ENCODE measurements at regions of chr7 and their contacts with region 1.

Region 1: GRCh38 chr7:121366852-121367431 is 29.2 kb downstream of the FAM3C start:
- DNase-seq: peak; percentile 48
- ATAC-seq: no peak; the same call in 1 of the 2 replicates
- H3K4me3 ChIP-seq: no peak overlapping the region
- H3K27ac ChIP-seq: no peak overlapping the region
- H3K4me1 ChIP-seq: peaks cover 5% of the 10 kb centered on the region
- H3K27me3 ChIP-seq: no peaks in the 10 kb centered on the region
- CTCF ChIP-seq: peak; percentile 83
- POLR2A ChIP-seq: no peak
- RAD21 ChIP-seq: peak; percentile 74

Region 2: DNA sequence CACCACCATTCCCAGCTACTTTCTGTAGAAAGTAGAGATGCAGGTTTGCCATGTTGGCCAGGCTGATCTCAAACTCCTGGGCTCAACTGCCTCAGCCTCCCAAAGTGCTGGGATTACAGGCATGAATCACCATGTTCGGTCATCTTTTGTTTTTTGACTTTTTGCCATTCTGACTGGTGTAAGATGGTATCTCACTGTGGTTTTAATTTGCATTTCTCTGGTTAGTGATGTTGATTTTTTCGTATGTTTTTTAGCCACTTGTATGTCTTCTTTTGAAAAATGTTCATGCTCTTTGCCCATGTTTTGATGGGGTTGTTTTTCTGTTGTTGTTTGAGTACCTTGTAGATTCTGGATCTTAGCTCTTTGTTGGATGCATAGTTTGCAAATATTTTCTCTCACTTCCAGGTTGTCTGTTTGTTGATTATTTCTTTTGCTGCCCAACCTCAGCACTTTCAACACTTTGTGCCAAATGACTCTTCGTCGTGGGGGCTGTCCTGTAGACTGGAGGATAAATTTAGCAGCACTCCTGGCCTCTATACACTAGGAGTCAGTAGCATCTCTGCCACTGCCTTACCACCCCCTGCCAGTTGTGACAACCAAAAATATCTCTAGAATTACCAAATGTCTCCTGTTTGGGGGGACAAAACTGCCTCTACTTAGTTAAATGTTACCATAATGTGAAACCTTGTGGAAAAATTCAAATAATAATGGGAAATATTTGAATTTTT is 384.9 kb before region 1 on chr7:
- CTCF ChIA-PET with region 1: no interaction called
- POLR2A ChIA-PET with region 1: no interaction called
- dilution Hi-C with region 1: no loop called
- in situ Hi-C with region 1: no loop called
- intact Hi-C with region 1: no loop called
- DNase-seq: peak; percentile 76
- ATAC-seq: peak; percentile 76
- H3K4me3 ChIP-seq: no peak overlapping the region
- H3K27ac ChIP-seq: no peak overlapping the region
- H3K4me1 ChIP-seq: peaks cover 5% of the 10 kb centered on the region
- H3K27me3 ChIP-seq: no peaks in the 10 kb centered on the region
- CTCF ChIP-seq: no peak
- POLR2A ChIP-seq: no peak
- RAD21 ChIP-seq: no peak

Region 3: DNA sequence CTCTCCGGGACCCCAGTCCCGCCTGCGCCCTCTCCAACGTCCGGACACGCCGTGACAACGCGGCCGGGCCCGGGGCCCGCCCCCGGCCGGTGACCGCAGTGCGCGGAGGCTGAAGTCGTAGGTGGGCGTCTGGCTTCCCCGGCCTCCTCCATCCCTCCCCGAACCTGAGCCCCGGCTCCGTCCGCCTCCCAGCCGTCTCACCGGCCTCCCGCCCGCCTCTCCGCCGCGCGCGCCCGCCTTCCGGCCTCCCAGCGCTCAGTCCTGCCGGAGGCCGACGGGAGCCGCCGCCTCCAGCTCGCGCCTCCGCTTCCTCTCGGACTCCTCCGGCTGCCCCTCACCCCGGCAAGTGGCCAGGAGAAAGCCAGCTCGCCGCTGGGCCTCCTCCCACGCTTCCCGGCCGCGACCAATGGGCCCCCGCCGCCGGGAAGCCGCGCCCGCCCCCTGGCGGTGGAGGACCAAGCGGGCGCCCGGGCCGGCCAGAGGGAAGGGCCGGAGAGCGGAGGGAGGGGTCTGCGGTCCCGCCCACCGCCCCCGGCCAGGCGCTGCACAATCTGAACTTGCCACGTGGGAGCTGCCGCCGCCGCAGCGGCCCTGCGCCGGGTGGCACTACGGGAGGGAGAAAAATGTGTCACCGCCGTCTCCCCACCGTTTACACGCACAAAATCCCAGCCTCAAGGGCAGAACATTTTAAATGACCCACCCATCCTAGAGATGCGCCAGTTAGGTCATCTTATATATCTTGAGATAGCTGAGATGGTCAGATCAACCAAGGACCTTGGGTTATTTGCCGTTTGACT is 29.2 kb after region 1 on chr7 and contains the start of gene FAM3C:
- CTCF ChIA-PET with region 1: interaction called, 11 read pairs
- POLR2A ChIA-PET with region 1: no interaction called
- dilution Hi-C with region 1: no loop called
- in situ Hi-C with region 1: no loop called
- intact Hi-C with region 1: no loop called
- DNase-seq: peak; percentile 88
- ATAC-seq: peak; percentile 99
- H3K4me3 ChIP-seq: peak within 1 kb of the TSS; percentile 83
- H3K27ac ChIP-seq: peak within 1 kb of the TSS; percentile 79
- H3K4me1 ChIP-seq: no peaks in the 10 kb centered on the region
- H3K27me3 ChIP-seq: no peaks in the 10 kb centered on the region
- CTCF ChIP-seq: peak; percentile 98
- POLR2A ChIP-seq: peak; percentile 95
- RAD21 ChIP-seq: no peak; the same call in 1 of the 2 replicates
- total RNA-seq, gene FAM3C: 11.5 and 35.0 TPM in 2 replicates

Region 4: DNA sequence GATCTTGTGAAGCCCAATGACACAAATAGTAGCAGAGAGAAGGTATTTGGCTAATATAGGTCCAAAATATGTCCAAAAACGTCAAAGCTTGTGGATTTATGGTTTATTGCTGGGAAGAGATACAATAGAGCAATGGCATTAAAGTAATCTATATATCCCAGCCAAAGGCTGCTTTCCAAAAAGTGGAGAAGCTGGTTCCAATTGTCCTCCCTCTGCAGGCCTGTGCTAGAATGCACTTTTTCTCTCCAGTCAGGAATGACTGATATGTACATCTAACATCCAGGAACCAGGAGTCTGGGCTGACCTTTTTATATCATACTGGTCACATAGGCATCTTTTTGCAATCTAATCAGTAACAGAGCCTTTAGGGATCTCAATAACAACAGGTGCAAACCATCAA is 196.2 kb after region 1 on chr7:
- CTCF ChIA-PET with region 1: interaction called, 7 read pairs
- POLR2A ChIA-PET with region 1: no interaction called
- dilution Hi-C with region 1: loop called (anchors 25 kb)
- in situ Hi-C with region 1: no loop called
- intact Hi-C with region 1: no loop called
- DNase-seq: no peak
- ATAC-seq: no peak
- H3K4me3 ChIP-seq: no peak overlapping the region
- H3K27ac ChIP-seq: no peak overlapping the region
- H3K4me1 ChIP-seq: no peaks in the 10 kb centered on the region
- H3K27me3 ChIP-seq: no peaks in the 10 kb centered on the region
- CTCF ChIP-seq: peak; percentile 9; the same call in 1 of the 2 replicates
- POLR2A ChIP-seq: no peak
- RAD21 ChIP-seq: no peak

Region 5: GRCh38 chr7:121744319-121744718 is 377.4 kb after region 1 on chr7:
- CTCF ChIA-PET with region 1: no interaction called
- POLR2A ChIA-PET with region 1: no interaction called
- dilution Hi-C with region 1: no loop called
- in situ Hi-C with region 1: no loop called
- intact Hi-C with region 1: loop called (anchors 10 kb)
- DNase-seq: no peak
- ATAC-seq: no peak
- H3K4me3 ChIP-seq: no peak overlapping the region
- H3K27ac ChIP-seq: no peak overlapping the region
- H3K4me1 ChIP-seq: no peaks in the 10 kb centered on the region
- H3K27me3 ChIP-seq: no peaks in the 10 kb centered on the region
- CTCF ChIP-seq: no peak
- POLR2A ChIP-seq: no peak
- RAD21 ChIP-seq: no peak